HAP-1 (cell line): ENCODE measurements at regions of chr12 and their contacts with region 1.

Region 1: DNA sequence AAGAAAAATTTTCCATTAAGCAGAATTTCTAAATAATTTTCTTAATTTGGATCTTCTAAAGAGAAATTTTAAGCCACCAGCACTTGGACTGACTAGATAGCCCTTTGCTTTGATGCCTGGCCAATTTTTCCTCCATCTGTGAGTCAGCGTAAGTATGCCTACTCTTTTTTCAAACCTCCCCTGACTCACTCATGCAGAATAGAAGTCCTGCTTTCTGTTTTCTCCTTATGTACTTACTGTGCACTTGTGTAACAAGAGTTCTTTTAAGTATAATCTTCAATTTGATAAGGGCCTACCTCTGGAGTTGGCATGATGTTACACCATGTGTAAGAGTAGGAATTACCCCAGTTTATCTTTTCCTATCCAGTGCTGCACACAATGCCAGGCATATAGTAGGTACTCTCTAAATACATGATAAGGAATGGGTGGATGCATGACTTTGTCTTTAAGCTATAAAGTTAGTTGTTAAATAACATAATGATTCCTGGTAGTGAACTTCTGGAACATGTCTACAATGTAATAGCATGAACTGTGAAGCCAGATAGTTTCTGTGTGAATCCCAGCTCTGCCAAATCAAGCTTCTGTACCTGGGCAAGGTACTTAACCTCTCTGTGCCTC is 329.6 kb downstream of the TMTC2 start:
- DNase-seq: no peak
- H3K4me3 ChIP-seq: no peak overlapping the region
- H3K4me1 ChIP-seq: peaks cover 3% of the 10 kb centered on the region
- H3K27me3 ChIP-seq: no peaks in the 10 kb centered on the region

Region 2: GRCh38 chr12:82685790-82686167 is 330.5 kb before region 1 on chr12:
- in situ Hi-C with region 1: loop called (anchors 25 kb)
- DNase-seq: peak; percentile 93 to 98
- H3K4me3 ChIP-seq: peak overlapping the region; percentile 72
- H3K4me1 ChIP-seq: peaks cover 15% of the 10 kb centered on the region
- H3K27me3 ChIP-seq: no peaks in the 10 kb centered on the region

Region 3: GRCh38 chr12:83823431-83823963 is 807.2 kb after region 1 on chr12:
- in situ Hi-C with region 1: loop called (anchors 25 kb)
- DNase-seq: peak; percentile 63 to 82
- H3K4me3 ChIP-seq: no peak overlapping the region
- H3K4me1 ChIP-seq: no peaks in the 10 kb centered on the region; the same call in 1 of the 2 replicates
- H3K27me3 ChIP-seq: no peaks in the 10 kb centered on the region